ENCODE measurements at regions of chr2 and their contacts with region 1.

Region 1: GRCh38 chr2:182980115-182980514 is 58.1 kb downstream of the NCKAP1 start:
- DNase-seq: peak; percentile 62
- ATAC-seq: peak; percentile 77
- H3K4me3 ChIP-seq: no peak overlapping the region
- H3K27ac ChIP-seq: no peak overlapping the region
- H3K4me1 ChIP-seq: no peaks in the 10 kb centered on the region
- H3K27me3 ChIP-seq: no peaks in the 10 kb centered on the region
- CTCF ChIP-seq: peak; percentile 62
- POLR2A ChIP-seq: no peak
- RAD21 ChIP-seq: peak; percentile 59

Region 2: GRCh38 chr2:182763311-182763912 is 216.7 kb before region 1 on chr2:
- CTCF ChIA-PET with region 1: interaction called, 7 read pairs
- POLR2A ChIA-PET with region 1: interaction called, 6 read pairs
- dilution Hi-C with region 1: no loop called
- in situ Hi-C with region 1: loop called (anchors 10 kb)
- intact Hi-C with region 1: loop called (anchors 1 kb)
- DNase-seq: peak; percentile 43
- ATAC-seq: peak; percentile 57
- H3K4me3 ChIP-seq: no peak overlapping the region
- H3K27ac ChIP-seq: no peak overlapping the region
- H3K4me1 ChIP-seq: no peaks in the 10 kb centered on the region
- H3K27me3 ChIP-seq: no peaks in the 10 kb centered on the region
- CTCF ChIP-seq: peak; percentile 50
- POLR2A ChIP-seq: no peak
- RAD21 ChIP-seq: peak; percentile 48

Region 3: GRCh38 chr2:182784777-182785176 is 195.3 kb before region 1 on chr2:
- CTCF ChIA-PET with region 1: interaction called, 3 read pairs
- POLR2A ChIA-PET with region 1: no interaction called
- dilution Hi-C with region 1: no loop called
- in situ Hi-C with region 1: no loop called
- intact Hi-C with region 1: loop called (anchors 1 kb)
- DNase-seq: peak; percentile 60
- ATAC-seq: peak; percentile 78
- H3K4me3 ChIP-seq: no peak overlapping the region
- H3K27ac ChIP-seq: no peak overlapping the region
- H3K4me1 ChIP-seq: no peaks in the 10 kb centered on the region
- H3K27me3 ChIP-seq: no peaks in the 10 kb centered on the region
- CTCF ChIP-seq: peak; percentile 59
- POLR2A ChIP-seq: no peak
- RAD21 ChIP-seq: peak; percentile 70

Region 4: DNA sequence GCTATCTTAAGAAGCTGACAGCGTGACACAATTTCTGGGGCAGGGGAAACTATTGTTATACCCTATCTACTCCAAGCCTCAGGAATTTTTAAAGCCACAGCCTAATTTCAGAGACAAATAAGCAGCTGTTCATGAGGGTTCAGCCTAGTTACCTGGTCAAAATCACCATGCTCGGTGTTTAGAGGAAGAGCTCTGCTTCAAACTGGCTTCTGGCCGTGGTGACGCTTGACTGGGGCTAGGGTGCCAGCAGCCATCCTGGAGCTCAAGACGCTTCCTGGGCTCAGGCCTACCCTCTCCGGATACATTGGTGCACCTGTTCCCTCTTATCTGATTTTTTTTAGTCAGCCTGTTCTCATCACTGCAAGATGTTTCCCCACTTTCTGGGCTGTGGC is 155.4 kb before region 1 on chr2:
- CTCF ChIA-PET with region 1: no interaction called
- POLR2A ChIA-PET with region 1: no interaction called
- dilution Hi-C with region 1: no loop called
- in situ Hi-C with region 1: no loop called
- intact Hi-C with region 1: no loop called
- DNase-seq: no peak
- ATAC-seq: no peak
- H3K4me3 ChIP-seq: no peak overlapping the region
- H3K27ac ChIP-seq: no peak overlapping the region
- H3K4me1 ChIP-seq: no peaks in the 10 kb centered on the region
- H3K27me3 ChIP-seq: no peaks in the 10 kb centered on the region
- CTCF ChIP-seq: no peak
- POLR2A ChIP-seq: no peak
- RAD21 ChIP-seq: no peak

Region 5: DNA sequence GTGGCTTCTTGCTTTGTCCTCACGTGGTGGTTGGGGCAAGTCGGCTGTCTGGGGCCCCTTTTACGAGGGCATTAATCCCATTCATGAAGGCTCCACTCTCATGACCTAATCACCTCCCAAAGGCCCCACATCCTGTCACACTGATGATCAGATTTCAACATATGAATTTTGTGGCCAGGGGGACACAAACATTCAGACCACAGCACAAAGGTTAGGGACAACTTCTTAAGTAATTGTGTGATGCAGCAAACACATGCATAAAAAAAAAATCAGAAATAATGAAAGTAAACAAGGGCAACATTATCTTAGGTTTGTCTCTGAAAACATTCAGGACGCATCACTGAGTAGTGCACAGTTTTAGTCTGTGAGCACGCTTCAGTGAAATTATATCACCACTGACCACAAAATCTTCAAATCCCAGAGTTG is 59.5 kb before region 1 on chr2:
- CTCF ChIA-PET with region 1: no interaction called
- POLR2A ChIA-PET with region 1: no interaction called
- dilution Hi-C with region 1: no loop called
- in situ Hi-C with region 1: no loop called
- intact Hi-C with region 1: loop called (anchors 10 kb)
- DNase-seq: no peak
- ATAC-seq: no peak
- H3K4me3 ChIP-seq: no peak overlapping the region
- H3K27ac ChIP-seq: no peak overlapping the region
- H3K4me1 ChIP-seq: peaks cover 7% of the 10 kb centered on the region
- H3K27me3 ChIP-seq: no peaks in the 10 kb centered on the region
- CTCF ChIP-seq: no peak
- POLR2A ChIP-seq: no peak
- RAD21 ChIP-seq: no peak